Caco-2 (cell line): ENCODE measurements at regions of chr20 and their contacts with region 1.

Region 1: GRCh38 chr20:17710379-17711266 is 10.9 kb downstream of the BANF2 start:
- DNase-seq: peak; percentile 76 to 83
- H3K4me3 ChIP-seq: peak overlapping the region; percentile 46
- H3K4me3 Mint-ChIP-seq: peak overlapping the region; percentile 68
- H3K27ac Mint-ChIP-seq: peak overlapping the region; percentile 82
- H3K4me1 ChIP-seq: peaks cover 78% of the 10 kb centered on the region
- H3K4me1 Mint-ChIP-seq: peaks cover 54% of the 10 kb centered on the region
- H3K27me3 ChIP-seq: no peaks in the 10 kb centered on the region
- H3K27me3 Mint-ChIP-seq: no peaks in the 10 kb centered on the region
- CTCF ChIP-seq: no peak

Region 2: DNA sequence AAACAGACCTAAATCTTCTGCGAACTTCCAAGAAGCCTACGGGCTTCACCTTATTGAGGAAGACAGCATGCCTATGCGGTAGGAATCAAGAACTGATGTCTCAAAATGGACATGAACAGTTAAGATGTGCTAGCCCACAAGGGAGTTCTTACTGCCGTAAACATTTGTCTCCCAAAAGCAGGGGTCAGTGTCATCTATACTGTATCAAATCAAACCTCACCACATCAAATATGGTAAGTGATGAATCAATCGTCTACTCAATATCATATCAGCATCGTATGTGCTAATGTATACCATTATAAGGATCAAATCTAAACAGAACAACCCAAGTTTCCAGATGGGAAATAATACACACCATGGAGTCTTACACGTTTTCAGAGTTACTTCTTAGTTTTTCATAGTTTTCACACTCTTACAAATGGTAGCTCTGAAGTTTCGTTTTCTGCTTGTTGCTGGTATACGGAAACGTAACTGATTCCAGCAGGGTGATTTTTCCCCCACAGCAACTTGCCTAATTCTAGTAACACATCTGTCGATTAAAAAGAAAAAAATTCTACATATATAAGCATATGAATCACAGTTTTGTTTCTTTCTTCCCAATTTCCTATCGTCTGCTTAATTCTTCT is 41.2 kb before region 1 on chr20:
- CTCF ChIA-PET with region 1: no interaction called
- POLR2A ChIA-PET with region 1: no interaction called
- intact Hi-C with region 1: no loop called
- DNase-seq: no peak
- H3K4me3 ChIP-seq: no peak overlapping the region
- H3K4me3 Mint-ChIP-seq: no peak overlapping the region
- H3K27ac Mint-ChIP-seq: no peak overlapping the region
- H3K4me1 ChIP-seq: peaks cover 9% of the 10 kb centered on the region; the same call in 1 of the 2 replicates
- H3K4me1 Mint-ChIP-seq: peaks cover 26% of the 10 kb centered on the region
- H3K27me3 ChIP-seq: no peaks in the 10 kb centered on the region
- H3K27me3 Mint-ChIP-seq: no peaks in the 10 kb centered on the region
- CTCF ChIP-seq: no peak

Region 3: DNA sequence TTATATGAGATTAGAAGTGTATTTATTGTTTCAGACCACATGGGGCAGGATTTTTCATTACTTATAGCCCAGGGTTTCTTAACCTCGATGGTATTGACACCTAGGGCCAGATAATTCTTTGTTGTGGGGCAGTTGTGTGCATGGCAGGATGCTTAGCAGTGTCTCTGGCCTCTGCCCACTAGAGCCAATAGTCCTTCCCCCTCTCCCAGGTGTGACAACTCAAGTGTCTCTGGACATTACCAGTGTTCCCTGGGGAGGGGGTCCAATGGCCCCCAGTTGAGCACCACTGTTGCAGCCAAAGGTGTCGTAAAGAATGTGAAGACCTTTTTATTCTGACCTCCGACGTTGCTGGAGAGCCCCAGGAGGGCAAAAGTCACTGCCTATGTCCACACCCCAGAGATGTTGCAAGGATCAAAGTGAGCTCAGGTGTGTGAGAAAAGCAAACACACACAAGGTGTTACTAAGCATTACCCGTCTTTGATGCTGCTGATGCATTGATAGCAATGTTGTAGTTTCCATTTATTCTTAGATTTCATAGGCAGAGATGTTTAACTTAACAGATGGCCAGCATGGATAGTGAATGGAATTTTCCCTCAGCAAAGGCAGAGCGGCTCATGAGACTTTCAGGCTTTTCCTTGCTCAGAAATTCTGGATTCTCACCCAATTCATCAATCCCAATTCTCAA is 11.3 kb after region 1 on chr20:
- CTCF ChIA-PET with region 1: interaction called, 10 read pairs
- POLR2A ChIA-PET with region 1: interaction called, 18 read pairs
- intact Hi-C with region 1: loop called (anchors 1 kb)
- DNase-seq: peak; percentile 95 to 98
- H3K4me3 ChIP-seq: no peak overlapping the region
- H3K4me3 Mint-ChIP-seq: peak overlapping the region; percentile 48
- H3K27ac Mint-ChIP-seq: peak overlapping the region; percentile 95
- H3K4me1 ChIP-seq: peaks cover 50% of the 10 kb centered on the region
- H3K4me1 Mint-ChIP-seq: peaks cover 49% of the 10 kb centered on the region
- H3K27me3 ChIP-seq: no peaks in the 10 kb centered on the region
- H3K27me3 Mint-ChIP-seq: no peaks in the 10 kb centered on the region
- CTCF ChIP-seq: peak; percentile 21 to 58

Region 4: DNA sequence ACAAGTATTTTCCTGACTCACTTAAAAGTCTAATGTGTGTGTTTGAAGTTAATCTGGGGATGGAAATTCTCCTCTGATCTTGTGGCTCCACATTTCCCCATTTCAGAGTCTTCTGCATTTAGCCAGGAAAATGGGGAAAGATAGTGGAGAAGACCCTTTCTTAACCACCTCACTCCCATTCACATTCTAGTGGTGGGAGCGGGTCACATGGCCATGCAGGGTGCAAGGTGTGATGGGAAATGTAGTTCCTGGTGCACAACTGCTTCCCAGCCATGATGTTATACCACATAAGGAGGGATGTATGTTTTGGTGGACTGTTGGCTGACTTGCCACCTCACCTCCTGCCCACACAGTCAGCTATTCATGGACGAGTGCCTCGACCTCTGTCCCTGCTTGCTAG is 51.0 kb after region 1 on chr20:
- CTCF ChIA-PET with region 1: no interaction called
- POLR2A ChIA-PET with region 1: no interaction called
- intact Hi-C with region 1: no loop called
- DNase-seq: no peak
- H3K4me3 ChIP-seq: no peak overlapping the region
- H3K4me3 Mint-ChIP-seq: no peak overlapping the region
- H3K27ac Mint-ChIP-seq: no peak overlapping the region
- H3K4me1 ChIP-seq: peaks cover 14% of the 10 kb centered on the region
- H3K4me1 Mint-ChIP-seq: peaks cover 18% of the 10 kb centered on the region
- H3K27me3 ChIP-seq: no peaks in the 10 kb centered on the region
- H3K27me3 Mint-ChIP-seq: no peaks in the 10 kb centered on the region
- CTCF ChIP-seq: no peak